ENCODE measurements at regions of chr7 and their contacts with region 1.

Region 1: GRCh38 chr7:121547544-121548092 is 151.5 kb upstream of the FAM3C start:
- DNase-seq: no peak
- H3K4me3 Mint-ChIP-seq: no peak overlapping the region
- H3K27ac Mint-ChIP-seq: no peak overlapping the region
- H3K4me1 Mint-ChIP-seq: peaks cover 29% of the 10 kb centered on the region
- H3K27me3 Mint-ChIP-seq: no peaks in the 10 kb centered on the region

Region 2: DNA sequence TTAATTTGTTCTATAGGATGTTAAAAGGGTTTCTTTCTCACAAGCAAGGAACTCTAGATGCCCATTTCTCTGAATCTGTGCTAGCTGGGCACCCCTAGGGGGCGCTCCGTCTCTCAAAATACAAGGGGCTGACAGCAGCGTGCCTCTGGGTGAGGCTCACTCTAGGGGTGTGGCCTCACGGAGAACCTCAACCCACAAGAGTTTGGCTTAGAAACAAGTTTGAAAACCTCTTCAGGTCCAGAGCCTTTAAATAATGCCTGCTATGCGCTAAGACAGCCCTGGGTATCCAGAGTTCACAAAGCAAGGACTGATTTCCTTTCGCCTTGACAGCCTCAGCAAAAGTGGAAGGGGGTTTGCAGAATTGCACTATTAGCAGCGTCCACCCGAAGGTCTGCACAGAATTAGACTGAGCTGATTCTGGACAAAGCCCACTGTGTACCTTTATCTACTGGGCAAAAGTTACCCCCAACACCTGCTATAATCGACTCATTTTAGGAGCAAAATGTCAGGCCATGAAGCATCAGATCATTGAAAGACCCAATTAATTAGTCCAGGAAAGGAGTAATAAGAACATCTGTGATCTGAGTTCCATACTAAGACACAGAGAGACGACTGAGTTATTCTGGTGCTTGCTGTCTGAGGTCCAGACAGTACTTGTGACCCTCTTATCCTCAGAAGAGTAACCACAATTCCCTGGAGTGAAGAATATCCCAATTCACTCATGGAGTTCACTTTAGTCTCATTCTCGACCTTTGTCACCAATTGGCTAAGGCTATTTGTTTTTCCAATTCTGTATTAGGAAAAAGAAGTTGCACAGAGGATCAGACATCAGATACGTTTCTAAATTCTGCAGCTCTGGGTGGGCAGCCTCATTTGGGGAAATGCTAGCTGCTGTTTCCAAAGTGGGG is 559.7 kb before region 1 on chr7:
- CTCF ChIA-PET with region 1: interaction called, 6 read pairs
- intact Hi-C with region 1: loop called (anchors 2 kb)
- DNase-seq: peak; percentile 89
- H3K4me3 Mint-ChIP-seq: peak overlapping the region; percentile 71
- H3K27ac Mint-ChIP-seq: no peak overlapping the region
- H3K4me1 Mint-ChIP-seq: peaks cover 14% of the 10 kb centered on the region
- H3K27me3 Mint-ChIP-seq: peaks cover 43% of the 10 kb centered on the region

Region 3: DNA sequence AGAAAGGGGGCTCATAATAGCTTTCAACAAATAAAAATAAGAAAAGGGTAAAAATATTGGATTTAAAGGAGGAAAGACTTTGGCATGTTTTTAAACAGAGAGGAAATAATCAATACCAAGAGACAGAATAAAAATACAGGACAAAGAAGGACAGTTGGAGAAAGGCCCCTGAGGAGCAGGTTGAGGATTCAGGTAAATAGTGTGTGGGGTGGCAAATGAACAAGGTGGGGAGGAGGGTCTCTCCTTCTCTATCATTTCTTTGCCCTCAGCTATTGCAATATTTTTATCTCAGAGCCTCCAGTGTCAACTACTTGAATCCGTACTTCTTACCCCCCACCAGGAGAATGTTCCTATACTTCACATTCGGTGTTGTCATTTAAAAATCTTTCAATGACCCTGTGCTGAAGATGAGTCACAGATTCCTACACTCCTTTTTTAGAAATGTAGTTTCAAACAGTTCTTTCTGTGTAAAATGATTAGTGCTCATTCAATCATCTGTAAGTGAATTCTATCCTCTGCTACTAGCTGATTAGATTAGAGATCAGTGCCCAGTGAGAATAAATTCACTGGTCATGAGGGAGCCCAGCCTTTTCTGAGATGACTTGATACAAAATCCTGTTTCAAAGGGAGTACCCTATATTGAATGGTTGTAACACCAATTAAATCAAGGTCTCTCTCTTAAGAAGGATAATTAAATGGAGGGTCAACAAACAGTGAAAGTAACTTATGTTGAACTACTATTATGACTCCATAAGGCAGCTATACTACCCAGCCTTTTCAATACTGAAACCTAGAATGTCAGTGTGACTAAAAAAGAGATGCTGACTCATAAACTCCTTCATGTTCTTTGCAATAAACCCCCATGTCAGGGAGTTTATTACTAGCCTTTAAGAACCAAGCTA is 269.2 kb before region 1 on chr7:
- CTCF ChIA-PET with region 1: no interaction called
- intact Hi-C with region 1: loop called (anchors 1 kb)
- DNase-seq: no peak
- H3K4me3 Mint-ChIP-seq: no peak overlapping the region
- H3K27ac Mint-ChIP-seq: peak overlapping the region; percentile 28
- H3K4me1 Mint-ChIP-seq: peaks cover 15% of the 10 kb centered on the region
- H3K27me3 Mint-ChIP-seq: peaks cover 34% of the 10 kb centered on the region

Region 4: DNA sequence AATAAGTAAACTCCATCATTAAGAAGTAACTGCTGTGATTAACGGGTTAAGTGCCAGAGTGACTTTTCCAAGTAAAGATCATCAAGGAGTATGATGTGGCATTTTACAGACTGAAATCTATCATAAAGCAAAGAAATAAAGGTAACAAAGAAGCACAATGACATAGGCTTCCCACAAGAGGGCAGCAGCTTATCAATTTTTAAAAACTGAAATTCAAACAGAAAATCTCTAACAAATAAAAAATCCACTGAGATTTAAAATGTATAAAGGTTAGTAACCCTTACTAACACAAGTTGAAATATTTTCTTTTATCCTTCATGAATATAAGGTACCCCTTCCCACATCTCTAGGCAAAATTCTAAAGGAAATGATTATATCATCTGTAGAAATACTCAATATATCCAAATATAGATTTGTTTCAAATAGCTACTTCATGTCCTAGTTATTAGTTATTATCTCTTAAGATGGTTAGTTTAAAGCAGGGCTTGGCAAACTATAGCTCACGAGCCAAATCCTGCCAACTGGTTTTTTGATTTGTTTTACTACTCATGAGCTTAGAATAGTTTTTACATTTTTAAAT is 180.7 kb before region 1 on chr7:
- CTCF ChIA-PET with region 1: interaction called, 54 read pairs
- intact Hi-C with region 1: loop called (anchors 1 kb)
- DNase-seq: peak; percentile 43
- H3K4me3 Mint-ChIP-seq: no peak overlapping the region
- H3K27ac Mint-ChIP-seq: no peak overlapping the region
- H3K4me1 Mint-ChIP-seq: peaks cover 13% of the 10 kb centered on the region
- H3K27me3 Mint-ChIP-seq: no peaks in the 10 kb centered on the region

Region 5: GRCh38 chr7:121437456-121438127 is 110.0 kb before region 1 on chr7:
- CTCF ChIA-PET with region 1: interaction called, 4 read pairs
- intact Hi-C with region 1: loop called (anchors 1 kb)
- DNase-seq: no peak
- H3K4me3 Mint-ChIP-seq: no peak overlapping the region
- H3K27ac Mint-ChIP-seq: no peak overlapping the region
- H3K4me1 Mint-ChIP-seq: peaks cover 22% of the 10 kb centered on the region
- H3K27me3 Mint-ChIP-seq: no peaks in the 10 kb centered on the region

Region 6: GRCh38 chr7:121515630-121516401 is 31.8 kb before region 1 on chr7:
- CTCF ChIA-PET with region 1: no interaction called
- intact Hi-C with region 1: no loop called
- DNase-seq: no peak
- H3K4me3 Mint-ChIP-seq: no peak overlapping the region
- H3K27ac Mint-ChIP-seq: no peak overlapping the region
- H3K4me1 Mint-ChIP-seq: no peaks in the 10 kb centered on the region
- H3K27me3 Mint-ChIP-seq: peaks cover 2% of the 10 kb centered on the region

Region 7: GRCh38 chr7:121530227-121531174 is 17.1 kb before region 1 on chr7:
- CTCF ChIA-PET with region 1: interaction called, 3 read pairs
- intact Hi-C with region 1: loop called (anchors 1 kb)
- DNase-seq: peak; percentile 46
- H3K4me3 Mint-ChIP-seq: no peak overlapping the region
- H3K27ac Mint-ChIP-seq: peak overlapping the region; percentile 62
- H3K4me1 Mint-ChIP-seq: peaks cover 17% of the 10 kb centered on the region
- H3K27me3 Mint-ChIP-seq: no peaks in the 10 kb centered on the region

Region 8: DNA sequence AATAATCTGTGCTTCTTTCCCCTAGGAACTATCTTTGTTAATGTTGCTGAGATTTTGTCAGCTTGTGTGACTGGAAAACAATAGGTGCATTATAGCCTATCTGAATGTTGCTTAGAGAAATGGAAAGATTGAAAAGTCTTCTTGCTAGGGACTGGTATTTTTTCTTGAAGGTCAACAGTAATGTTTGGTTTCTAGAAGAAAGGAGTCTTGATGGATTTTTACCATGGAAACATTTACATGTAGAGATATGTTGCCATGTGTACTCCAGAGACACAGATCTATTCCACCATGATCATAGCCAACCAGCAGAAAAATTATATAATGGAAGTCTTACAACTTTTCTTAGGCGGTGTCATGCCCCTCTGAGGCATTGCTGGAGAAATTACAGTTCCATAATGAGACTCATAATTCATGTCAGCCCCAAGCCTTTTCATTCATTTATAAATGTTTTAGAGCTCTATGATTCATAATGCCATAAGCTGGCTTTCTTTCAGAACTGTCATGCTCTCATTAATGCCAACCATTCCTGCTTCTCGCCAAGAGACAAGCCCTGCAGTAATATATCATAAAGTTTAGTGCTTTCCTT is 150.2 kb after region 1 on chr7:
- CTCF ChIA-PET with region 1: no interaction called
- intact Hi-C with region 1: no loop called
- DNase-seq: no peak
- H3K4me3 Mint-ChIP-seq: no peak overlapping the region
- H3K27ac Mint-ChIP-seq: no peak overlapping the region
- H3K4me1 Mint-ChIP-seq: no peaks in the 10 kb centered on the region
- H3K27me3 Mint-ChIP-seq: no peaks in the 10 kb centered on the region

Measured in activated naive CD4-positive, alpha-beta T cell treated with anti-CD3 and anti-CD28 coated beads for 36 hours (primary cell).